Activated CD4-positive, alpha-beta memory T cell treated with anti-CD3 and anti-CD28 coated beads for 36 hours (primary cell): ENCODE measurements at regions of chr16 and their contacts with region 1.

Region 1: DNA sequence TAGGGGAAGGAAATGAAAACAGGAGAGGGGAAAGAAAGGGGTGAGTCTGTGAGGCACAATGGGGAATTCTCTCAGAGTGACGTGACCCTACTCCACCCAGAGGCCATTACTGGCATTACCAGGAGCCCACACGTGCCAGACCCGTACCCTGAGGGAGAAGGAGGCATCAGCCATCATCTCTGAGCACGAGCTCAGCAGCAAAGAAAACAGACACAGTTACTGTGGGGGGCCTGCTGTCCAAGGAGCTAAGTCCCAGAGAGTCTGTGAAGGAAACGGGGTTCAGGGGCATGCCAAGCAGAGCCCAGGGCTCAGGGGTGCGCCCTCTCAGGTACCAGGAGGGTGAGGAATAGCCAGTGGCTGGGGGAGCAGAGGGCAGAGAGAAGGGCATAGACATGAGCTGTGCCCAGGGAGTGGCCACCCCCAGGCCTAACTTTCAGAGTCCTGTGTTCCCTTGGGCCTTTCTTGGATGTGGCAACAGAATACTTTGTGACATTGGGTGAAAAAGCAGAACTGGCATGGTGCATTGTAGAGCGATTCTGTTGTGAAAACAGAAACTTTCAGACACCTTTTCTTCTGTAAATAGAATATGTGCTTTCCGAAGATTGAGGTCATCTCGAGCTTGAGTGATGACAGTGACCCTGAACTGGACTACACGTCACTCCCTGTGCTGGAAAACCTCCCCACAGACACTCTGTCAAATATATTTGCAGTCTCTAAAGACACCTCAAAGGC is 11.3 kb downstream of the TAF1C start:
- DNase-seq: peak; percentile 79
- H3K4me3 Mint-ChIP-seq: no peak overlapping the region
- H3K27ac Mint-ChIP-seq: no peak overlapping the region
- H3K4me1 Mint-ChIP-seq: peaks cover 25% of the 10 kb centered on the region
- H3K27me3 Mint-ChIP-seq: peaks cover 6% of the 10 kb centered on the region

Region 2: GRCh38 chr16:84103678-84104077 is 71.8 kb before region 1 on chr16:
- CTCF ChIA-PET with region 1: no interaction called
- POLR2A ChIA-PET with region 1: no interaction called
- intact Hi-C with region 1: loop called (anchors 5 kb)
- DNase-seq: no peak
- H3K4me3 Mint-ChIP-seq: no peak overlapping the region
- H3K27ac Mint-ChIP-seq: no peak overlapping the region
- H3K4me1 Mint-ChIP-seq: peaks cover 43% of the 10 kb centered on the region
- H3K27me3 Mint-ChIP-seq: no peaks in the 10 kb centered on the region

Region 3: GRCh38 chr16:84144859-84145639 is 30.5 kb before region 1 on chr16 and contains the starts of genes DNAAF1 and HSDL1:
- CTCF ChIA-PET with region 1: interaction called, 7 read pairs
- POLR2A ChIA-PET with region 1: interaction called, 5 read pairs
- intact Hi-C with region 1: loop called (anchors 2 kb)
- DNase-seq: peak; percentile 95
- H3K4me3 Mint-ChIP-seq: peak within 1 kb of the TSS; percentile 93
- H3K27ac Mint-ChIP-seq: peak within 1 kb of the TSS; percentile 76
- H3K4me1 Mint-ChIP-seq: peaks cover 11% of the 10 kb centered on the region
- H3K27me3 Mint-ChIP-seq: no peaks in the 10 kb centered on the region
- total RNA-seq, gene DNAAF1: not detected
- total RNA-seq, gene HSDL1: 13.1 to 13.8 TPM

Region 4: GRCh38 chr16:84156342-84156784 is 19.2 kb before region 1 on chr16:
- CTCF ChIA-PET with region 1: interaction called, 11 read pairs
- POLR2A ChIA-PET with region 1: no interaction called
- intact Hi-C with region 1: no loop called
- DNase-seq: no peak
- H3K4me3 Mint-ChIP-seq: no peak overlapping the region
- H3K27ac Mint-ChIP-seq: no peak overlapping the region
- H3K4me1 Mint-ChIP-seq: no peaks in the 10 kb centered on the region
- H3K27me3 Mint-ChIP-seq: peaks cover 26% of the 10 kb centered on the region

Region 5: GRCh38 chr16:85010931-85011845 is 835.7 kb after region 1 on chr16 and contains the start of gene ZDHHC7:
- CTCF ChIA-PET with region 1: no interaction called
- POLR2A ChIA-PET with region 1: no interaction called
- intact Hi-C with region 1: no loop called
- DNase-seq: peak; percentile 89
- H3K4me3 Mint-ChIP-seq: peak within 1 kb of the TSS; percentile 99
- H3K27ac Mint-ChIP-seq: peak within 1 kb of the TSS; percentile 92
- H3K4me1 Mint-ChIP-seq: peaks cover 37% of the 10 kb centered on the region
- H3K27me3 Mint-ChIP-seq: no peaks in the 10 kb centered on the region
- total RNA-seq, gene ZDHHC7: 23.5 to 25.1 TPM